ENCODE measurements at regions of chr2 and their contacts with region 1.

Region 1: DNA sequence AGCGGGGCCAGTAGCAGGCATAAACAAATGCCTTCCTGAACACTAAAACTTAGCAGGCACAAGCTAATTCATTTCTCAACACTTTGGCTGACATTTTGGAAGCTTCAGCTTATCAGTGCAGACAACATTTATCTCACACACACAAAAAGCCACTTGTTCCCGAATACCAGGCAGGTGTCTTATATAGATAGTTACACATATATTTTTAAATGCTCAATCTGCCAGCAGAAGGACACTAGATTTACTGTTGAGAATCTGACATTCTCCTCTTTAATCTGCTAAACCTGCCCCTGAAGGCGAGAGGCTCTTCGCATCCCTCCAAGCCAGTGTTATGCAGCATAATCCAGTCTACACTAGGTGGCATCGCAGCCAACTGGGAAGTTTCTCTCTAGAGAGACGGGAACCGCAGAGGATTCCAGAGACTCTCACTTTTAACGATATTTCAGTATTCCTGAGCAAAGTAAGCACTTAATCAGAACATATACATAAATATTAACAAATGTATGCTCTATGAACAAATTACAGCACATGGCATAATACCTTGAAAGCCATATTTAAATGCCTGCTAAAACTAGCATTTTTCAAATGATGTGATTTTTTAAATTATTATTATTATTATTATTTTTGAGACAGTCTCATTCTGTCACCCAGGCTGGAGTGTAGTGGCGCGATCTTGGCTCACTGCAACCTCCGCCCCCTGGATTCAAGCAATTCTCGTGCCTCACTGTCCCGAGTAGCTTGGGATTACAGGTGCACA is 90.2 kb upstream of the SCG2 start:
- DNase-seq: peak; percentile 58 to 76
- ATAC-seq: peak; percentile 95
- H3K4me3 ChIP-seq: no peak overlapping the region
- H3K27ac ChIP-seq: peak overlapping the region; percentile 69 to 75
- H3K4me1 ChIP-seq: peaks cover 35% of the 10 kb centered on the region
- CTCF ChIP-seq: peak; percentile 89
- EP300 ChIP-seq: no peak
- POLR2A ChIP-seq: no peak
- RAD21 ChIP-seq: peak; percentile 87 to 90

Region 2: GRCh38 chr2:223674998-223675609 is 17.3 kb before region 1 on chr2:
- CTCF ChIA-PET with region 1: interaction called, 10 read pairs
- POLR2A ChIA-PET with region 1: no interaction called
- DNase-seq: peak; percentile 48 to 70
- ATAC-seq: peak; percentile 92 to 99
- H3K4me3 ChIP-seq: no peak overlapping the region
- H3K27ac ChIP-seq: peak overlapping the region; percentile 41 to 79
- H3K4me1 ChIP-seq: peaks cover 21% of the 10 kb centered on the region
- CTCF ChIP-seq: peak; percentile 82
- EP300 ChIP-seq: no peak
- POLR2A ChIP-seq: no peak
- RAD21 ChIP-seq: peak; percentile 81 to 86

Region 3: DNA sequence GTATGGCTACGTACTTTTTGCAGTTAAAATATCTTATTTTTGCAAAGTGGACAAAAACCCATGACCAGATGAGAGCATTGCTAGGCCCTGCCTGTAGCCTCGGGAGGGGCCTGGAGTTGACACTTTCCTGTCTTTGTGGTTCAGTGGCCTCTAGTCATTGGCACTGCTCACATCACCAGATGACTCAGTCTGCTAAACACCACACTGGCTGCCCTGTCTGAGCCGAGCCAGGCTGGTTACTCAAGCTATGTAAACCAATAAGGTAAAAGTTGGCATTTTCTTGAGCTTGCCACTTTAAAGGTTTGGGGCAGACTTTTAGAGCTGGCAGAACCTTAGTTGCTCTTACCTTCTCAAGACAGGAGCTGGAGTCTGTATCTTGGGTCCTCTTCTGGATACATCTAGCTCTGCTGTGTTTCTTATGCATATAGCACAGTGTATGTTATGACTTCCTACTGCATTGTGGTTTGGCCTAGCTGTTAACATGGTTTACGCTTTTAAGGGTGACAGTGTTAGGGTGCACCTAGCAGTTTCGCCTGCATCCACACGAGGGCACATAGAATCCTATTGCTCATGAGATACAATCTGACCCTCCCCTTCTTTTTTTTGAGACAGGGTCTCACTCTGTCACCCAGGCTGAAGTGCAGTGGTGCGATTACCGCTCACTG is 68.6 kb after region 1 on chr2:
- CTCF ChIA-PET with region 1: interaction called, 19 read pairs
- POLR2A ChIA-PET with region 1: no interaction called
- DNase-seq: peak; percentile 42 to 90
- ATAC-seq: peak; percentile 94 to 96
- H3K4me3 ChIP-seq: no peak overlapping the region
- H3K27ac ChIP-seq: peak overlapping the region; percentile 94 to 96
- H3K4me1 ChIP-seq: peaks cover 57% of the 10 kb centered on the region
- CTCF ChIP-seq: peak; percentile 47
- EP300 ChIP-seq: peak in 1 of 2 experiments; percentile 43; a peak in 1 of 5 replicates
- POLR2A ChIP-seq: no peak
- RAD21 ChIP-seq: peak; percentile 31 to 42; a peak in 4 of 5 replicates

Measured in A549 (cell line).